Mammary epithelial cell (primary cell): ENCODE measurements at regions of chr1 and their contacts with region 1.

Region 1: GRCh38 chr1:7224644-7225043 is 439.4 kb downstream of the CAMTA1 start:
- DNase-seq: no peak
- H3K4me3 ChIP-seq: no peak overlapping the region
- H3K27ac ChIP-seq: no peak overlapping the region
- H3K4me1 ChIP-seq: no peaks in the 10 kb centered on the region
- H3K27me3 ChIP-seq: no peaks in the 10 kb centered on the region
- CTCF ChIP-seq: peak; percentile 6 to 17

Region 2: DNA sequence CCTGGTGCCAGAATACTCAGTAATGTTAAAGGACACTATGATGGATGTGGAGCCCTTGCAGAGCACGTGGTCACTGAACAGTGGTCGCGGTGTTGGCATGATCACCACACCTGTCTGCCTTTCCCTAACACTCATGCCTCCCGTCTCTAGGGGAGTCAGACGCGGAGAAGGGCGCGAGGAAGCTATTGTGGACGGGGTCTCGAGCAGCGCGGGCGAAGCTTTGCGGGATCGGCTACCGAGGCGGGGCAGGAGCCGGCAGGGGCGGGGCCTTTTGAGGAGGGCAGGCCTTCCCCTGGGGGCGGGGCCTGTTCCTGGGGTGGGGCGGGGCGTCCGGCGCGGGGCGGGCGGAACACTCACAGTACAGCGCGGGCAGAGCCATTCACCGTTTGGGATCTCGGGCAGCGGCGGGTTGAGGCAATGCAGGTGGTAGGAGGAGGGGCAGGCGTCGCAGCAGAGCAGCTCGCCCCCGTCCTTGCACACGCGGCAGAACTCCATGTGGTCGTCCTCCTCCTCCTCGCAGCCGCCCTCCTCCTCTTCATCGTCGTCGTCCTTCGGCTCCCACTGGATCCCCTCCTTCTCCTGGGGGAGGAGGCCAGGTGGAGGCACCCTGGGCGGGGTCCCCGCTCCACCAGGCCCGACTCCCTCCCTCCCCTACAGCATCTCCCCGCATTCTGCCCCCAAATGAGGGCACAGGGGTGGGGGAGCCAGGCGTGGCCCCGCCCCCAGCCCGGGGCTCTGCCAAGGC is 1076.0 kb before region 1 on chr1:
- CTCF ChIA-PET with region 1: no interaction called
- dilution Hi-C with region 1: no loop called
- in situ Hi-C with region 1: no loop called
- intact Hi-C with region 1: no loop called
- DNase-seq: peak; percentile 61
- H3K4me3 ChIP-seq: peak overlapping the region in 2 of 3 experiments; percentile 25 to 35
- H3K27ac ChIP-seq: no peak overlapping the region
- H3K4me1 ChIP-seq: peaks cover 7% of the 10 kb centered on the region
- H3K27me3 ChIP-seq: no peaks in the 10 kb centered on the region
- CTCF ChIP-seq: no peak

Region 3: DNA sequence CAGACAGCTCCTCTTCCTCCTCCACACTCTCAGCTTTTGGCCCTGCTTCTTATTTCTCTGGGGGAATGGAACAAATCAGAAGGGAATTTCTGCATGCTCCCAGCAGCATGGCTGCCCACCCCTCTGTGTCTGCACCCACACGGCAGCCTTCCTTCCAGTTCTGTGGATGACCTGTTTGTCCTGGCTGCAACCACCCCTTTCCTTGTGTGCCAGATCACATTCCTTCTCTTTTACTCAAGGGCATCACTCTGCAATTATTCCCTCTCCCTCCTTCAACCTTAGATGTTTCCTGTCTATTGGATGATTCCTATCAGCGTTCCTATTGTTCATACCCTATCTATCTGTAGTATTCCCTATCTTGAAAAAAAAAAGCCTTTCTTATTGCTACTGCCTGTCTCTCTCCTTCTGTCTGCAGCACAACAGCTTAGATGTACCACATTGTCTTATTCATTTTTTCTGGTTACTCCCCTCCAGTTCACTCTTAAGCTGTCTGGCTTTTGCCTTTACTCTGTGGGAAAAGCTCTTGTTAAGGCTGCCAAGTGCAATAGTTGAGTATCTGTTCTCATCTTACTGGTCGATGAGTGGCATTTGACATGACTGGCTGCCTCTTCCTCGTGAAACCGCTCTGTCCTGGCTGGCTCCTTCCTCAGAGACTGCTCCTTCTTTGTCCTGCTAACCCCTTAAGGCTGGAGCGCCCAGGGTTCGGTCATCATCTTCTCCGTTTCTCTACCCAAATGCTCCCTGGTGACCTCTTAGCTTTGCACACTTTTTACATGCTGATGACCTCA is 88.3 kb before region 1 on chr1:
- CTCF ChIA-PET with region 1: no interaction called
- dilution Hi-C with region 1: no loop called
- in situ Hi-C with region 1: no loop called
- intact Hi-C with region 1: no loop called
- DNase-seq: no peak
- H3K4me3 ChIP-seq: no peak overlapping the region
- H3K27ac ChIP-seq: no peak overlapping the region
- H3K4me1 ChIP-seq: peaks cover 10% of the 10 kb centered on the region
- H3K27me3 ChIP-seq: no peaks in the 10 kb centered on the region
- CTCF ChIP-seq: no peak

Region 4: GRCh38 chr1:7172804-7173203 is 51.8 kb before region 1 on chr1:
- CTCF ChIA-PET with region 1: no interaction called
- dilution Hi-C with region 1: loop called (anchors 5 kb)
- in situ Hi-C with region 1: no loop called
- intact Hi-C with region 1: no loop called
- DNase-seq: no peak
- H3K4me3 ChIP-seq: no peak overlapping the region
- H3K27ac ChIP-seq: no peak overlapping the region
- H3K4me1 ChIP-seq: no peaks in the 10 kb centered on the region
- H3K27me3 ChIP-seq: no peaks in the 10 kb centered on the region
- CTCF ChIP-seq: no peak